RWPE1 (cell line): ENCODE measurements at regions of chr19 and their contacts with region 1.

Region 1: GRCh38 chr19:49327878-49328544 is 3.0 kb upstream of the SLC6A16 start:
- DNase-seq: peak; percentile 41
- H3K27ac ChIP-seq: no peak overlapping the region
- CTCF ChIP-seq: peak; percentile 63

Region 2: GRCh38 chr19:49133621-49134454 is 194.2 kb before region 1 on chr19:
- CTCF ChIA-PET with region 1: no interaction called
- POLR2A ChIA-PET with region 1: no interaction called
- DNase-seq: peak; percentile 64
- H3K27ac ChIP-seq: peak overlapping the region; percentile 61
- CTCF ChIP-seq: no peak

Region 3: GRCh38 chr19:49224856-49225255 is 103.2 kb before region 1 on chr19:
- CTCF ChIA-PET with region 1: interaction called, 13 read pairs
- POLR2A ChIA-PET with region 1: no interaction called
- DNase-seq: peak; percentile 65
- H3K27ac ChIP-seq: no peak overlapping the region
- CTCF ChIP-seq: peak; percentile 38; the same call in 1 of the 2 replicates

Region 4: DNA sequence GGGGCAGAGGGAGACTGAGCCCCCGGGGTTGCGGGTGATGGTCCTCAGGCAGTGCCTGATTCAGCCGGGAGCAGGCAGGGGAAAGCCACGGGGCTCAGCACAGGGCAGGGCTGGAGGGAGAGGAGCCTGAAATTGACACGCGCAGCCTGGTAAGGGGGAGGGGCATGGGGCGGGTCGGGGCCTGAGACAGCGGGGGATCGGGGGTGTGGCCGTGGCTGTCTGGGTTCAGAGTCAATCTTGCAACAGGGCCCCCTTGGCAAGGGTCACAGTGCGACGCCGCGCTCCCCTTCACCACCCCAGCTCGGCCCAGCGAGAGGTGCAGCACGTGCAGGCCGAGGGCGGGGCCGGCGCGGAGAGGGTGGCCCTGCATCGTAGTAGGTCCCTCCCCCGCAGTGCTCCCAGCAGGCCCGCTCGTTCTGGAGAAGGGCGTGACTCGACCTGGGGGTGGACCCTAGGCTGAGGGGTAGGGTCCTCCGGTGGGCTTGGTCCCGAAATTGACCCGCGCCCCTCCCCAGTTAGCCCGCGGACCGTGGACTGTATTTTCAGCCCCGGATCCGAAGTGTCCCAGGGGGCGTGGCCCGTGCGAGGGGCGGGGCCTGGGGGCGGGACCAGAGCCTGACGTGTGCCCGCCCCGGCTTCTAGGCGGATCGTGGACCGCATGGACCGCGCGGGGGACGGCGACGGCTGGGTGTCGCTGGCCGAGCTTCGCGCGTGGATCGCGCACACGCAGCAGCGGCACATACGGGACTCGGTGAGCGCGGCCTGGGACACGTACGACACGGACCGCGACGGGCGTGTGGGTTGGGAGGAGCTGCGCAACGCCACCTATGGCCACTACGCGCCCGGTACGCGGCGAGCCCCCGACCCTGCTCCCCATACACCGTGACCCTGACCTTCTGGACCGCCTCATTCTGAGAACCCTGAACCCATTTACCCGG is 205.8 kb after region 1 on chr19:
- CTCF ChIA-PET with region 1: no interaction called
- POLR2A ChIA-PET with region 1: no interaction called
- DNase-seq: peak; percentile 73
- H3K27ac ChIP-seq: peak overlapping the region; percentile 4; the same call in 1 of the 2 replicates
- CTCF ChIP-seq: peak; percentile 46